ENCODE measurements at regions of chr3 and their contacts with region 1.

Region 1: DNA sequence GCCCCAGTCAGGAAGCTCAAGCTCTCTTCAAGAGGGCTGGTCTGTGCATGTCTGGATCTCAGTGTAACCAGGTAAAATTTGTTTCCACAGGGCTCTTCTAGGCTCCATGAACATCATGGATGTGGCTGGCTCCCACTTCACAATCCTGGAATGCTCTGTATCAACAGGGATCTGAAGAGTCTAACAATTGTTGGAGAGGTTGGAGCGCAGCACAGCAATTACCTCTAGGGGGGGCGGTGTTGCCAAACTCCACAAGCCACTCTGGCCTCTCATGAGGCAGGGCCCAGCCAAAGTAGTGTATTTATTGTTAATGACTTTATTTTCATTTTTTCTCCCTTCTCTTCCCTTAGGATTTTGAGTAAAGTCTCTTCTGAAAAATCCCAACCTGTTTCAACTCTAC is 6.1 kb upstream of the EIF2B5 start:
- DNase-seq: no peak
- H3K4me3 ChIP-seq: no peak overlapping the region
- CTCF ChIP-seq: no peak
- POLR2A ChIP-seq: no peak

Region 2: DNA sequence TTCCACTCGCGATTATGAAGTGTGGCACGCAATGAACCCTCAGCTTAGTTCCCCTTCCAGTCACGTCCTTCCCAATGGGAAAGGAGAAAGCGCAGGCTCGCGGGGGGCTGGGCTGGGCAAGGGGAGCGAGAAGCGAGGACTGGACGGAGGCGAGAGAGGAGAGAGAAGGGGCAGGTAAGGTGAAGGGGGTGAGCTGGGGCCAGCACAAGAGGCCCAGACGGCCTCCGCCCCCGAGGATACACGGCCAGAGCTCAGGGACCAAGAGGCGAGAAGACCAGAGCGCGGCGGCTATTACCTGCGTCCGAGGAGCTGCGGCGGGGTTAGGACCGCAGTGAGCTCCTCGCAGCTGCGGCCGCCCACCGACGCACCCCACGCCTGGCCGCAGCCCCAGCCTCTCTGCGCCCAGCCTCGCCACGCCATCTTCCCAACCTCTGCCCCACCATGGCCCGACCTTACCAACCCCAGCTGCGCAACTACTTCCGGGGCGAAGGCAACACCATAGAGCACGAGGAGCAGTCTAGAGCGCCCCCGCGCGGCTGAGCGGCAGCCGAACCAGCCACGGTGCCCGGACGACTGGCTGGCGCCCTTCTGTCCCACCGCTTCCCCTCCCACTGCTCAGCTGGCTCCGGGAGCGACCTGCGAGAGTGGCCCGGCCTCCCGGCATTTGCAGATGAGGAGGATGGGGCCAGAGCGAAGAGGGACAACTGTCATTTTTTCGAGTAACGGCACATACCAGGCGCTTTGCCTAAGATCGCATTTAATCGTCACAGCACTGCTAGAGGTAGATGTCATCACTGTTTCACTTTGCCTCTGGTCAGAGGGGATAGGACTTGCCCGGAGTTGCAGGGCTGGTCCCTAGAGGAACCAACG is 244.3 kb before region 1 on chr3 and contains the start of gene PARL:
- intact Hi-C with region 1: loop called (anchors 10 kb)
- DNase-seq: peak; percentile 94 to 99
- H3K4me3 ChIP-seq: peak within 1 kb of the TSS; percentile 93
- CTCF ChIP-seq: peak in 1 of 3 donors; percentile 90
- POLR2A ChIP-seq: no peak
- total RNA-seq, gene PARL: 19.5 to 40.5 (median 22.3) TPM

Region 3: DNA sequence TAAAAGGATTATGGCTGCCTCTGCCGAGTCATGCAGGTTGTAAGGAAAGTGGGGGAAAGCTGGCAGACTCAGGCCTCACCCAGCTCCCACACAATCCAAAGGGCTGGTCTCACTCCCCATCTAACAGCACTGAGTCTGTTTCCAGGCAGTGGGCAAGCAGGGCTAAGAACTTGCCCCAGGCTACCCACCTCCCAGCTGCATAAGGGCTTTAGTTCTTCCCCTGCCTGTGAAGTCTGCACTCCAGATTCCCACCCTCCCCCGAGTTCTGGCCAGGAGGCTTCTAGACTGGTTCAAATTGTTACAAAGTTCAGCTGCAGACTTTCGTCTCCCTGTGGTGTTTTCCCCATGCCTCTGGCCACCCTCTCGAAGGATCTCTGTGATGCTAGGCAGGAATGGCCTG is 1113.6 kb after region 1 on chr3:
- intact Hi-C with region 1: no loop called
- DNase-seq: no peak
- H3K4me3 ChIP-seq: no peak overlapping the region
- CTCF ChIP-seq: no peak
- POLR2A ChIP-seq: no peak

Measured in lower leg skin (tissue), 4 donors.